ENCODE measurements at regions of chr2 and their contacts with region 1.

Region 1: DNA sequence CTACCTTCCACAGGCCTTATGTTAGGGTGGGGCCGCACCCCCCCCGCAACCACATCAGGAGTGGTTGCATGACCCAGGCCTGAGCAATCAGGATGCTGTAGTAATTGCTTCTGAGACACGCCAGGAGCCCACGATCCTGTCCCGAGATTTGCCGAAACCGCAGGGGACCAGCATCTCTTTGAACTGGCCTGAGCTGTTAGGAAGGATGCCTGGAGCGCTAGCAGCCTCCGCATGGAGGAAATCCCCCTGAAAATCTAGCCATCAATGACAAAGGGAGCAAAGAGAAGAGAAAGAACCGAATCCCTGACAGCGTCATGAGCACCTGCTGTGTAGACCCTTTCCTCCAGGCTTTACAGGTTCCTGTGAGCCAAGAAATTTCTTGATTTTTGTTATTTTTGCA is 8.7 kb upstream of the TEX44 start:
- DNase-seq: no peak
- H3K4me3 ChIP-seq: no peak overlapping the region
- H3K27ac ChIP-seq: no peak overlapping the region
- H3K4me1 ChIP-seq: no peaks in the 10 kb centered on the region
- H3K27me3 ChIP-seq: no peaks in the 10 kb centered on the region
- CTCF ChIP-seq: no peak

Region 2: GRCh38 chr2:231568785-231569435 is 15.1 kb before region 1 on chr2:
- CTCF ChIA-PET with region 1: interaction called, 4 read pairs
- POLR2A ChIA-PET with region 1: interaction called, 13 read pairs
- intact Hi-C with region 1: no loop called
- DNase-seq: no peak
- H3K4me3 ChIP-seq: no peak overlapping the region
- H3K27ac ChIP-seq: no peak overlapping the region
- H3K4me1 ChIP-seq: no peaks in the 10 kb centered on the region
- H3K27me3 ChIP-seq: no peaks in the 10 kb centered on the region
- CTCF ChIP-seq: no peak

Measured in A673 (cell line).